PC-9 (cell line): ENCODE measurements at regions of chr5 and their contacts with region 1.

Region 1: DNA sequence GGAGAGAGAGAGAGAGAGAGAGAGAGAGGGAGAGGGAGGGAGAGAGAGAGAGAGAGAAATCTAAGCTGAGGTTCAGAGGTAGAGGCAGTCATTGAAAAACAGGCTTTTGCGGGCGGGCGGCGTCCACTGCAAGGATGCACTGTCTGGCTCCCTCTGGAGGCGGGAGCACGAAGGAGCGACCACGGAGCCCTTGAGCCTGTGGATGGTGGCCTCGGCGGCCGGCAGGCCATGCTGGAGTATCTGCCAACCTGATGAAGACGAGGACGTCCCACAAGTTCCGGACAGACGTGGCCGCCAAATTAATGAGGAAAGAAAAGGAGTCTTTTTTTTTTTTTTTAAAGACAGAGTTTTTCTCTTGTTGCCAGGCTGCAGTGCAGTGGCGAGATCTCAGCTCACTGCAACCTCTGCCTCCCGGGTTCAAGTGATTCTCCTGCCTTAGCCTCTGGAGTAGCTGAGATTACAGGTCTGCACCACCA is 2.2 kb upstream of the CCDC125 start:
- DNase-seq: peak; percentile 53 to 81
- H3K4me3 ChIP-seq: no peak overlapping the region
- H3K27ac ChIP-seq: no peak overlapping the region
- H3K4me1 ChIP-seq: peaks cover 32% of the 10 kb centered on the region
- H3K27me3 ChIP-seq: no peaks in the 10 kb centered on the region
- CTCF ChIP-seq: peak; percentile 67

Region 2: DNA sequence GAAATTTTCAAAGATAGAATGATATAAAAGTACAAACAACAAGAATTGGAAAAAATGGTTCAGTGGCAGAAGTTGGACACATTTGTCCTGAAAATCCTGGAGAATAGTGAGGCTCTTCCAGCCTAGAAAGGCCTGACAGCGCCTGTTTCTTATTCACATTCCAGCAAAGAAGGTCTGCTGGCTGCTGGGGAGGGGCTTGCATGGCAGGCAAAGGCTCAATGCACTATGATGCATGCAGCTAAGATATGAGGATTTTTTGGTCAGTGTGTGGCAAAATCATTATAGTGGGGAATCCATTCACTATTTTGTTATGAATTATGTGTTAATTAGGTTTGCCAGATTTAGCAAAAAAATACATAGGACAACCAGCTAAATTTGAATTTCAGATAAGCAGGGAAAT is 484.9 kb before region 1 on chr5:
- CTCF ChIA-PET with region 1: no interaction called
- POLR2A ChIA-PET with region 1: no interaction called
- intact Hi-C with region 1: no loop called
- DNase-seq: no peak
- H3K4me3 ChIP-seq: no peak overlapping the region
- H3K27ac ChIP-seq: no peak overlapping the region
- H3K4me1 ChIP-seq: no peaks in the 10 kb centered on the region
- H3K27me3 ChIP-seq: no peaks in the 10 kb centered on the region
- CTCF ChIP-seq: no peak

Region 3: GRCh38 chr5:69093771-69094482 is 240.9 kb before region 1 on chr5 and contains the start of gene SLC30A5:
- CTCF ChIA-PET with region 1: no interaction called
- POLR2A ChIA-PET with region 1: interaction called, 19 read pairs
- intact Hi-C with region 1: loop called (anchors 5 kb)
- DNase-seq: peak; percentile 97 to 98
- H3K4me3 ChIP-seq: peak within 1 kb of the TSS; percentile 84
- H3K27ac ChIP-seq: peak within 1 kb of the TSS; percentile 68
- H3K4me1 ChIP-seq: peaks cover 10% of the 10 kb centered on the region
- H3K27me3 ChIP-seq: no peaks in the 10 kb centered on the region
- CTCF ChIP-seq: peak; percentile 91
- total RNA-seq, gene SLC30A5: 35.2 and 36.0 TPM in 2 replicates

Region 4: GRCh38 chr5:69189162-69190086 is 145.4 kb before region 1 on chr5 and contains the start of gene CENPH:
- CTCF ChIA-PET with region 1: no interaction called
- POLR2A ChIA-PET with region 1: no interaction called
- intact Hi-C with region 1: loop called (anchors 2 kb)
- DNase-seq: peak; percentile 83 to 94
- H3K4me3 ChIP-seq: peak within 1 kb of the TSS; percentile 64
- H3K27ac ChIP-seq: peak within 1 kb of the TSS; percentile 57
- H3K4me1 ChIP-seq: peaks cover 15% of the 10 kb centered on the region; the same call in 1 of the 2 replicates
- H3K27me3 ChIP-seq: no peaks in the 10 kb centered on the region
- CTCF ChIP-seq: no peak
- total RNA-seq, gene CENPH: 30.1 and 45.7 TPM in 2 replicates

Region 5: GRCh38 chr5:69359699-69360098 is 24.9 kb after region 1 on chr5:
- CTCF ChIA-PET with region 1: interaction called, 14 read pairs
- POLR2A ChIA-PET with region 1: no interaction called
- intact Hi-C with region 1: no loop called
- DNase-seq: no peak
- H3K4me3 ChIP-seq: no peak overlapping the region
- H3K27ac ChIP-seq: no peak overlapping the region
- H3K4me1 ChIP-seq: no peaks in the 10 kb centered on the region
- H3K27me3 ChIP-seq: no peaks in the 10 kb centered on the region
- CTCF ChIP-seq: no peak

Region 6: GRCh38 chr5:69444127-69444754 is 109.4 kb after region 1 on chr5:
- CTCF ChIA-PET with region 1: no interaction called
- POLR2A ChIA-PET with region 1: no interaction called
- intact Hi-C with region 1: no loop called
- DNase-seq: no peak
- H3K4me3 ChIP-seq: no peak overlapping the region
- H3K27ac ChIP-seq: no peak overlapping the region
- H3K4me1 ChIP-seq: no peaks in the 10 kb centered on the region
- H3K27me3 ChIP-seq: no peaks in the 10 kb centered on the region
- CTCF ChIP-seq: no peak